H1 (cell line): ENCODE measurements at regions of chr17 and their contacts with region 1.

Region 1: GRCh38 chr17:14926526-14927122 is 338.5 kb downstream of the PMP22 start:
- DNase-seq: peak; percentile 9 to 57
- H3K4me3 ChIP-seq: no peak overlapping the region
- H3K27ac ChIP-seq: no peak overlapping the region
- H3K4me1 ChIP-seq: no peaks in the 10 kb centered on the region; a peak in 1 of 7 replicates
- H3K27me3 ChIP-seq: no peaks in the 10 kb centered on the region
- CTCF ChIP-seq: peak in 2 of 3 experiments; percentile 71 to 75; a peak in 3 of 4 replicates
- EP300 ChIP-seq: no peak
- POLR2A ChIP-seq: no peak
- RAD21 ChIP-seq: peak; percentile 92 to 93

Region 2: DNA sequence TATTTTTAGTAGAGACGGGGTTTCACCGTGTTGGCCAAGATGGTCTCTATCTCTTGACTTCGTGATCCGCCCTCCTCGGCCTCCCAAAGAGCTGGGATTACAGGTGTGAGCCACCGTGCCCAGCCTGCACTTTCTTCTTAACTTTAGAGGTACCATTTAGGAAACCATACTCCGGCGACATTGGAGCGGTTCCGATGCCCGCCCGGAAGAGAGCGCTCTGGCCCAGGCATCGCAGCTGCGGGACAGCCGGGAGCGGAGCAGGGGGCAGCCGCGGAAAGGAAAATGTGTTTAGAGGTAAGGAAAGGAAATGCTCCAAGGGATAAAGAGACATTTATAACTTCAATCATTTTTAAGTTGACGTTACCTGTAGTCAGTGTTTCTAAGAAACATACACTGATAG is 631.7 kb before region 1 on chr17:
- CTCF ChIA-PET with region 1: interaction called, 11 read pairs
- POLR2A ChIA-PET with region 1: no interaction called
- DNase-seq: peak in 1 of 2 experiments; percentile 71
- H3K4me3 ChIP-seq: no peak overlapping the region
- H3K27ac ChIP-seq: no peak overlapping the region
- H3K4me1 ChIP-seq: peaks cover 4 to 16% (median 8%) of the 10 kb centered on the region in 4 experiments; a peak in 6 of 7 replicates
- H3K27me3 ChIP-seq: peaks cover 25 to 50% (median 43%) of the 10 kb centered on the region in 4 experiments
- CTCF ChIP-seq: peak; percentile 55 to 79 (median 58)
- EP300 ChIP-seq: no peak
- POLR2A ChIP-seq: no peak
- RAD21 ChIP-seq: peak; percentile 83 to 91

Region 3: DNA sequence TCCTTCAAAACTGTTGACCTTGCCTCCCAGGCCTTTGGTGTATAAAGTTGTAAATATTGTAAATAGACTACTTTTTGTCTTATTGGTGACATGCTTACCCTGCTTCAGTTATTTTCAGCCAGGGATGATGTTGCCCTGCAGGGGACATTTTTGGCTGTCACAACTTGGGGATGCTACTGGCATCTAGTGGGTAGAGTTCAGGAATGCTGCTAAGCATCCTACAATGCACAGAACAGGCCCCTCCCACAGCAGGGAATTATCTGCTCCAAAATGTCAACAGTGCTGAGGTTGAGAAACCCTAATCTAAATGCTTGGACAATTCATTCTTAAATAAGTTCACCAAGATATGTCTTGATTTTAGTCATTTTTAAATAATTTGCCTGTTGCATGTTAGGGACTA is 121.3 kb before region 1 on chr17:
- CTCF ChIA-PET with region 1: no interaction called
- POLR2A ChIA-PET with region 1: no interaction called
- DNase-seq: no peak
- H3K4me3 ChIP-seq: no peak overlapping the region
- H3K27ac ChIP-seq: no peak overlapping the region
- H3K4me1 ChIP-seq: no peaks in the 10 kb centered on the region
- H3K27me3 ChIP-seq: no peaks in the 10 kb centered on the region
- CTCF ChIP-seq: peak; percentile 38 to 64 (median 63)
- EP300 ChIP-seq: no peak
- POLR2A ChIP-seq: no peak
- RAD21 ChIP-seq: peak; percentile 87 to 91

Region 4: DNA sequence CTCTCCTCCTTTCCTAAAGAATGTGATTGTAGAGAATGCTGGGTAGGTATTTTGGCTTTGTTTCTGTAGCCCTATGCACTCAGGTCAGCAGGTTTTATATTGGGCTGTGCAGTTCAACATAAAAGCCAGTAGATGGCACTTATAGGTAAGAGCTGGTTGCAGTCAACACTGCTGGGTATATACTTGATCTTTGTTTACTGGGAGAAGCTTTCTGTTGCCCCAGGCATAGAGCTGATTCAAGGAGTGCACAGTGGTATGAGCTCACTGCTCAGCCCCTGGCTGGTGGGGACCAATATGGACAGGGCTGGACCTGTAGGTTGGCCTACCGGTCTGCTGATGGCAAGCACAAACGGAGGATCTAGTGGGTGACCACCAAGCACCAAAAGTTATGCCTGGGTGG is 40.4 kb before region 1 on chr17:
- CTCF ChIA-PET with region 1: interaction called, 27 read pairs
- POLR2A ChIA-PET with region 1: no interaction called
- DNase-seq: peak in 1 of 2 experiments; percentile 0
- H3K4me3 ChIP-seq: no peak overlapping the region
- H3K27ac ChIP-seq: no peak overlapping the region
- H3K4me1 ChIP-seq: no peaks in the 10 kb centered on the region
- H3K27me3 ChIP-seq: no peaks in the 10 kb centered on the region
- CTCF ChIP-seq: peak in 2 of 3 experiments; percentile 57 to 63; a peak in 3 of 4 replicates
- EP300 ChIP-seq: no peak
- POLR2A ChIP-seq: no peak
- RAD21 ChIP-seq: peak; percentile 69 to 80

Region 5: DNA sequence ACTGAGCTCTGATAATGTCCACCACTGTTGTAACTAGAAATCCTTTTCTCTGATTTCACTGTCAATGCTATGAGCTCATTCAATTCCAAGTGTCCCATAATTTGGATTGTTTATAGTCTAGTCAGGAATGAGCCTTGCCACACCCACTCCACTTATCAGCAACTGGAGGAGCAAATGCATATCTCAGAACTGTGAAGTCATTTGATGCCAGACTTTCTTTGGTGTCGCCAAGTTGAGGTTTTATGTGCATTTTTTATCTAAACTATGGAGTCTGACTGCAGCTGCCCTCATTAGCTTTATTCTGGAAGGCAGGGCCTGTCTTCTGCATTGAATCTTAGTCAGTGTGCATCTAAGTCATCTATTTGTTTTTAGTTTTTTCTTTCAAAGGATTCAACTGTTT is 22.8 kb before region 1 on chr17:
- CTCF ChIA-PET with region 1: interaction called, 10 read pairs
- POLR2A ChIA-PET with region 1: no interaction called
- DNase-seq: no peak
- H3K4me3 ChIP-seq: no peak overlapping the region
- H3K27ac ChIP-seq: no peak overlapping the region
- H3K4me1 ChIP-seq: 0 out of 7 replicates have a peak, but pooled peaks cover 0 to 2% (median 0%) of the 10 kb centered on the region in 4 experiments
- H3K27me3 ChIP-seq: no peaks in the 10 kb centered on the region
- CTCF ChIP-seq: no peak
- EP300 ChIP-seq: no peak
- POLR2A ChIP-seq: no peak
- RAD21 ChIP-seq: no peak

Region 6: DNA sequence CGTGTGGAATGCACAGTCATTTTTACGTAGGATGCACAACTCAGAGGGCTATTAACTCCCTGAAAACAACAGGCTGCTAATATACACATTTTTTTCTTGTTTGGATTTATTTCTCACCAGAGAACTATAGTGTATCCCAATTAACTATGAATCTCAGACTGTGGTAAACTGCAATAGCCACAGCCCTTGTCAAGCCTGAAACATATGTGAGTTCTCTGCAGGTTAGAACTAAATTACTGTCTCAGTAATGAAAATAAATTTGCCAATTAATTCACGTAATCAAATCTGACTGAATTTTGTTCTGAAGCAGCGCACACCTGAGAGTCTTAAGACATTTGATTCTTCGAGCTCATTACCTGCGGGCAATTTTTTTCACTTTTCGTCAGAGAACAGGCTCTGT is 19.9 kb after region 1 on chr17:
- CTCF ChIA-PET with region 1: interaction called, 17 read pairs
- POLR2A ChIA-PET with region 1: no interaction called
- DNase-seq: no peak
- H3K4me3 ChIP-seq: no peak overlapping the region
- H3K27ac ChIP-seq: no peak overlapping the region
- H3K4me1 ChIP-seq: no peaks in the 10 kb centered on the region
- H3K27me3 ChIP-seq: no peaks in the 10 kb centered on the region
- CTCF ChIP-seq: no peak
- EP300 ChIP-seq: no peak
- POLR2A ChIP-seq: no peak
- RAD21 ChIP-seq: no peak